HepG2 (cell line): ENCODE measurements at regions of chr6 and their contacts with region 1.

Region 1: GRCh38 chr6:32432050-32432450 is 7.6 kb upstream of the HLA-DRA start:
- DNase-seq: peak; percentile 27
- ATAC-seq: no peak
- H3K4me3 ChIP-seq: no peak overlapping the region
- H3K27ac ChIP-seq: no peak overlapping the region
- H3K4me1 ChIP-seq: peaks cover 6% of the 10 kb centered on the region
- H3K27me3 ChIP-seq: no peaks in the 10 kb centered on the region; a peak in 1 of 5 replicates
- CTCF ChIP-seq: peak; percentile 35
- EP300 ChIP-seq: no peak
- POLR2A ChIP-seq: no peak
- RAD21 ChIP-seq: 0 out of 2 replicates have a peak, but pooled peaks have one; percentile 19

Region 2: DNA sequence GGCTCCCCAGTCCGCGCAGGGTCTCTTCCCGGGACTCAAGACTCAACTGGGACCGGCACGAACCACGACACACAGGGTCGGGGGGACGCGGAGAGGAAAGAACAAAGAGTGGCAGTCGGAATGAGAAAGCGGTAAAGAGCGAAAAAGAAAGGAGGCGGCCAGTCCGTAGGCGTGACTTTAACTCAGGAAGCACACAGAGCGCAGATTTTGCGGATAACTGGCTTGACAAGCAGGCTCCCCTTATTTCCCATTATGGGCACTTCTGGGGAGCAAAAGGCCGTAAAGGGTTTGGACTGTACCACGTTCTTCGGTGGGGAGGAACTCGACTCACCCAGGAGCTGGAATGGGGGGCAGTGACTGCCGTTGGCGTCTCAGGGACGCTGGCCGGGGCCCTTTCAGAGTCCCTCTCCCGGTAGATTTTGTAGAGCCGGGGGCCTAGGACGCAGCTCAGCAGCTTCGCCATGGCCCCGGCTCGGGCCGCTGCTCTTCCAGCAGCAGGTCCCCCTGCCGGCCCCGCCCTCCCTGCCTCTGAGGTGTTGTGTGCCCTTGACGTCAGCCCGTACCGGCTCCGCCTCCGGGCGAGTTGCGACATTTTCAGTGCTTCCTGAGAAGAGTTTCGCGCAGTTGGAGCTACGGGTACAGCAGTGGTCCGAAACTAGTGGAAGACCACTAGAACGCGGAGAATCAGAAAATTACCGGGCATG is 729.1 kb before region 1 on chr6 and contains the start of gene ABHD16A:
- CTCF ChIA-PET with region 1: no interaction called
- POLR2A ChIA-PET with region 1: no interaction called
- in situ Hi-C with region 1: no loop called
- intact Hi-C with region 1: no loop called
- DNase-seq: peak; percentile 98
- ATAC-seq: peak; percentile 93
- H3K4me3 ChIP-seq: peak within 1 kb of the TSS; percentile 71 to 84 (median 81)
- H3K27ac ChIP-seq: peak within 1 kb of the TSS; percentile 85
- H3K4me1 ChIP-seq: peaks cover 39% of the 10 kb centered on the region
- H3K27me3 ChIP-seq: peaks cover 0 to 3% of the 10 kb centered on the region in 2 experiments; a peak in 2 of 5 replicates
- CTCF ChIP-seq: peak; percentile 33
- EP300 ChIP-seq: peak; percentile 56 to 79; a peak in 3 of 4 replicates
- POLR2A ChIP-seq: peak; percentile 93 to 96
- RAD21 ChIP-seq: no peak
- total RNA-seq, gene ABHD16A: 16.2 and 43.5 TPM in 2 replicates

Region 3: GRCh38 chr6:32402812-32403211 is 29.2 kb before region 1 on chr6:
- CTCF ChIA-PET with region 1: no interaction called
- POLR2A ChIA-PET with region 1: no interaction called
- in situ Hi-C with region 1: no loop called
- intact Hi-C with region 1: no loop called
- DNase-seq: no peak
- ATAC-seq: peak; percentile 72
- H3K4me3 ChIP-seq: no peak overlapping the region
- H3K27ac ChIP-seq: no peak overlapping the region
- H3K4me1 ChIP-seq: no peaks in the 10 kb centered on the region
- H3K27me3 ChIP-seq: peaks cover 0 to 23% of the 10 kb centered on the region in 2 experiments; a peak in 3 of 5 replicates
- CTCF ChIP-seq: no peak
- EP300 ChIP-seq: no peak
- POLR2A ChIP-seq: no peak
- RAD21 ChIP-seq: no peak

Region 4: DNA sequence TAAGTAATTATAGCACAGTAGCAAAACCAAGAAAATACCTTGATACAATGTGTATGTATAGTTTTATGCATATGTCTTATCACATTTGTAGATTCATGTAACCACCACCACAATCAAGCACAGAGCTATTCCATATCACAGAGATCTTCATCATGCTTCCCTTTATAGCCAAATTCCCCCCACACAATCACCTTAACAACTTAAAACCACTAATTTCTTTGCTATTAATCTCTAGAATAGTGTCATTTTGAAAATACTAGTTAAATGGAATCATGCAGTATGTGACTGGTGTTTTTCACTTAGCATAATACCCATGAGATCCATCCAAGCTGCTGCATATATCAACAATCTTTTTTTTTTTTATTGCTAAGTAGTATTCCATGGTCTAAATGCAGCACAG is 15.9 kb after region 1 on chr6:
- CTCF ChIA-PET with region 1: no interaction called
- POLR2A ChIA-PET with region 1: no interaction called
- in situ Hi-C with region 1: no loop called
- intact Hi-C with region 1: loop called (anchors 1 kb)
- DNase-seq: no peak
- ATAC-seq: no peak
- H3K4me3 ChIP-seq: no peak overlapping the region
- H3K27ac ChIP-seq: no peak overlapping the region
- H3K4me1 ChIP-seq: no peaks in the 10 kb centered on the region
- H3K27me3 ChIP-seq: peaks cover 0 to 3% of the 10 kb centered on the region in 2 experiments; a peak in 1 of 5 replicates
- CTCF ChIP-seq: no peak
- EP300 ChIP-seq: no peak
- POLR2A ChIP-seq: no peak
- RAD21 ChIP-seq: no peak

Region 5: DNA sequence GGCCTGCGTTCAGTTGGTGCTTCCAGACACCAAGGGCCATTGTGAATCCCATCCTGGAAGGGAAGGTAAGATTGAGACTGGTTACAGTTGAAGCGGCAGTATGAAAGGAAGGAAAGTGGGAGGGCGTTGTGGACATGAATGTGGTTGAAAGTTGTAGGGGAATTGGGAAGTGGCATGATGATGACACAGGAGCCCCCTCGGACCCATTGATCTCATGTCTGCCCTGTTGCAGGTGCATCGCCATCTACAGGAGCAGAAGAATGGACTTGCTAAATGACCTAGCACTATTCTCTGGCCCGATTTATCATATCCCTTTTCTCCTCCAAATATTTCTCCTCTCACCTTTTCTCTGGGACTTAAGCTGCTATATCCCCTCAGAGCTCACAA is 210.7 kb after region 1 on chr6:
- CTCF ChIA-PET with region 1: no interaction called
- POLR2A ChIA-PET with region 1: no interaction called
- in situ Hi-C with region 1: no loop called
- intact Hi-C with region 1: no loop called
- DNase-seq: no peak
- ATAC-seq: no peak
- H3K4me3 ChIP-seq: no peak overlapping the region
- H3K27ac ChIP-seq: no peak overlapping the region
- H3K4me1 ChIP-seq: no peaks in the 10 kb centered on the region
- H3K27me3 ChIP-seq: peaks cover 0 to 9% of the 10 kb centered on the region in 2 experiments; a peak in 2 of 5 replicates
- CTCF ChIP-seq: no peak
- EP300 ChIP-seq: no peak
- POLR2A ChIP-seq: no peak
- RAD21 ChIP-seq: no peak

Region 6: DNA sequence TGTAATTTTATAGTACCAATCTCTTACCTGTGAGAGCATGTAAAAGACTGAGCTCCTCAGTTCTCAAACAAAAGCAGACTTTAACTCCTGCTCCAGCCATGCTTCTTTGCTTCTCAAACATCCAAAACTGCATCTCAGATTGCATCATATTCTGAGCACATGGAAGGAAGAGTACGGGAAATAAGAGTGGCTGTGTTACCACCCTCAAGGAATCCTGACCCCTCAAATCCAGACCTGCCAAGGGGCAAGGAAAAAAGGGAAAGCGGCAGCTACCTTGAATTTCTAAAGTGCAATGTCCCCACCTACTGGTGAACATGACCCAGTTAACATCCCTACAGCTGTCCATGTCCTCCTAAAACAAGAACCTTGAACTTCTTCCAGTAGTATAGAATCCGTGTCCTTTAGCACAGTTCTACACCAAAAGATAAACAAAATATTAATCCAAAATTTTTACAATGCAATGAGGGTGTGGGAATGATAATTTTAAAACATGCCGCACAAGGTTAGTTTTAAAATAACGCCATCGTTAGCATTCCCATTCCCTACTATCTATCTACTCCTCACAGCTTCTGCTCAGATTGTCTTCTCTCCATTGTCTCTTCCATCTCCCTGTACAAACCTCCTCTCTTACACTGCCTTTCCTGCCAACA is 268.5 kb after region 1 on chr6:
- CTCF ChIA-PET with region 1: interaction called, 18 read pairs
- POLR2A ChIA-PET with region 1: no interaction called
- in situ Hi-C with region 1: no loop called
- intact Hi-C with region 1: loop called (anchors 5 kb)
- DNase-seq: peak; percentile 56
- ATAC-seq: peak; percentile 88
- H3K4me3 ChIP-seq: no peak overlapping the region
- H3K27ac ChIP-seq: no peak overlapping the region
- H3K4me1 ChIP-seq: no peaks in the 10 kb centered on the region
- H3K27me3 ChIP-seq: no peaks in the 10 kb centered on the region; a peak in 1 of 5 replicates
- CTCF ChIP-seq: peak; percentile 77
- EP300 ChIP-seq: no peak
- POLR2A ChIP-seq: no peak
- RAD21 ChIP-seq: peak; percentile 36; the same call in 1 of the 2 replicates

Region 7: DNA sequence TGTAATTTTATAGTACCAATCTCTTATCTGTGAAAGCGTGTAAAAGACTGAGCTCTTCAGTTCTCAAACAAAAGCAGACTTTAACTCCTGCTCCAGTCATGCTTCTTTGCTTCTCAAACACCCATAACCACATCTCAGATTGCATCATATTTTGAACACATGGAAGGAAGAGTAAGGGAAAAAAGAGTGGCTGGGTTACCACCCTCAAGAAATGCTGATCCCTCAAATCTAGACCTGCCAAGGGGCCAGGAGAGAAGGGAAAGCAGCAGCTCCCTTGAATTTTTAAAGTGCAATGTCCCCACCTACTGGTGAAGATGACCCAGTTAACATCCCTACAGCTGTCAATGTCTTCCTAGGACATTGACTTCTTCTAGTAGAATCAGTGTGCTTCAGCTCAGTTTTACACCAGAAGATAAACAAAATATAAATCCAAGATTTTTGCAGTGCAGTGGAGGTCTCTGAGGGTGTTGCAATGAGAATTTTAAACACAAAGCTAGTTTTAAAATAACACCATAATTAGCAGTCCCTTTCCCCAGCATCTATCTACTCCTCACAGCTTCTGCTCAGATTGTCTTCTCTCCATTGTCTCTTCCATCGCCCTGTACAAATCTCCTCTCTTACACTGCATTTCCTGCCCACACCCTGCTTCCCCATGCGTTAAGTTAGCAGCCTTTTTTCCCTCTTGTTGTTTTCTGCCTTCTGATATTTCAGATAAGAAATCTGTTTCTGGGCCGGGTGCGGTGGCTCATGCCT is 353.9 kb after region 1 on chr6:
- CTCF ChIA-PET with region 1: interaction called, 11 read pairs
- POLR2A ChIA-PET with region 1: no interaction called
- in situ Hi-C with region 1: no loop called
- intact Hi-C with region 1: loop called (anchors 1 kb)
- DNase-seq: peak; percentile 44
- ATAC-seq: peak; percentile 86
- H3K4me3 ChIP-seq: no peak overlapping the region
- H3K27ac ChIP-seq: no peak overlapping the region
- H3K4me1 ChIP-seq: peaks cover 7% of the 10 kb centered on the region; the same call in 1 of the 2 replicates
- H3K27me3 ChIP-seq: no peaks in the 10 kb centered on the region; a peak in 1 of 5 replicates
- CTCF ChIP-seq: peak; percentile 80
- EP300 ChIP-seq: no peak
- POLR2A ChIP-seq: no peak
- RAD21 ChIP-seq: peak; percentile 39; the same call in 1 of the 2 replicates